GM10248 (cell line): ENCODE measurements at regions of chr2 and their contacts with region 1.

Region 1: DNA sequence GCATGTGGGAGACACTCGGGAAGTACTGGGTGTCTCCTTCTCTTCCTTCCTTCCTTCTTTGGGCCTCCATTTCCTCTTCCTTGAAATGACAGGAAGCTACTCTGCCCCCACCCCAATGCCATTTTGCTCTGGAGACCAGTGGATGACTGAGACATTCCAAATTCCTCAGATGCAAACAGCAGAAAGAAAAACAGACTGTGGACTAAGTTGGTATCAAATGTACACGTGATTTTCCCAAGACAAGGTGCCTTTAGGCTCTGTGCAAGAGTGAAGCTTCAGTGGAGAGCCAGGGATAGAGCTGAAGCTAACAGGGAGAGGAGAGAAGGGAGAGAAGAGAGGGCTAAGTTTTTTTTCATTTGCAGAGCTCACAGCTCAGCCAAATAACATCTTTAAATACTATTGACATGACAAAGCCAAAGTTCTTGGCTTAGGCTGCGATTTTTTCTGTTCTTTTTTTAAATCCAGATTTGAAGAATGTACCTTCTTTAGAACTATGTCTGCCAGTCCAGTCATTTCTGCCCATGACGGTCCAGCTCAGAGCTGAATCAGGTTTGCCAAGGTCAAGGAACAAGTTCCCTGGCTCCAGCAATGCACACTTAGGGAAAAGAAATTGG is 84.5 kb upstream of the LCLAT1 start:
- DNase-seq: no peak
- CTCF ChIP-seq: no peak

Region 2: GRCh38 chr2:30325600-30326328 is 36.8 kb before region 1 on chr2:
- CTCF ChIA-PET with region 1: no interaction called
- POLR2A ChIA-PET with region 1: no interaction called
- DNase-seq: no peak
- CTCF ChIP-seq: no peak

Region 3: GRCh38 chr2:30346471-30347169 is 16.0 kb before region 1 on chr2:
- CTCF ChIA-PET with region 1: interaction called, 10 read pairs
- POLR2A ChIA-PET with region 1: no interaction called
- DNase-seq: no peak
- CTCF ChIP-seq: no peak